Heart right ventricle (tissue), 16 donors: ENCODE measurements at regions of chr3 and their contacts with region 1.

Region 1: DNA sequence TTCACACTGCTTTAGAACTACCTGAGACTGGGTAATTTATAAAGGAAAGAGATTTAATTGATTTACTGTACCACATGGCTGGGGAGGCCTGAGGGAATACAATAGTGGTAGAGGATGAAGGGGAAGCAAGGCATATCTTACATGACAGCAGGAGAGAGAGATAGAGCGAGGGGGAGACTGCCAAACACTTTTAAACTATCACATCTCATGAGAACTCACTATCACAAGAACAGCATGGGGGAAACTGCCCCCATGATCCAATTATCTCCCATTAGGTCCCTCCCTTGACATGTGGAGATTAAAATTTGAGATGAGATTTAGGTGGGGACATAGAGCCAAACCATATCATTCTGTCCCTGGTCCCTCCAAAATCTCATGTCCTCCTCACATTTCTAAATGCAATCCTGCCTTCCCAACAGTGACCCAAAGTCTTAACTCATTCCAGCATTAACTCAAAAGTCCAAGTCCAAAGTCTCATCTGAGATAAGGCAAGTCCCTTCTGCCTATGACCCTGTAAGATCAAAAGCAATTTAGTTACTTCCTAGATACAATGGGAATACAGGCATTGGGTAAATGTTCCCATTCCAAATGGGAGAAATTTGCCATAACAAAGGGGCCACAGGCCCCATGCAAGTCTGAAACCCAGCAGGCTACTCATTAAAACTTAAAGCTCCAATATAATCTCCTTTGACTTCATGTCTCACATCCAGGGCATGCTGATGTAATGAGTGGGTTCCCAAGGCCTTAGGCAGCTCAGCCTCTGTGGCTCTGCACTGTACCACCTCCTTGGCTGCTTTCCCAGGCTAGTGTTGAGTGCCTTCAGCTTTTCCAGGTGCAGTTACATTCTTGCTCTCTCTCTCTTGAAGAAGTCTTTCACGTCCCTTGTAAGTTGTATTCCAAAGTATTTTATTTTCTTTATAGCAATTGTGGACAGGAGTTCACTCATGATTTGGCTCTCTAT is 481.7 kb upstream of the TGFBR2 start:
- DNase-seq: peak in 1 of 2 donors; percentile 51
- ATAC-seq: peak in 5 of 8 donors; percentile 67 to 79 (median 78)
- H3K4me3 ChIP-seq: no peak overlapping the region
- H3K27ac ChIP-seq: no peak overlapping the region
- H3K4me1 ChIP-seq: peaks cover 0 to 10% (median 0%) of the 10 kb centered on the region in 9 donors
- H3K27me3 ChIP-seq: no peaks in the 10 kb centered on the region
- CTCF ChIP-seq: no peak

Region 2: DNA sequence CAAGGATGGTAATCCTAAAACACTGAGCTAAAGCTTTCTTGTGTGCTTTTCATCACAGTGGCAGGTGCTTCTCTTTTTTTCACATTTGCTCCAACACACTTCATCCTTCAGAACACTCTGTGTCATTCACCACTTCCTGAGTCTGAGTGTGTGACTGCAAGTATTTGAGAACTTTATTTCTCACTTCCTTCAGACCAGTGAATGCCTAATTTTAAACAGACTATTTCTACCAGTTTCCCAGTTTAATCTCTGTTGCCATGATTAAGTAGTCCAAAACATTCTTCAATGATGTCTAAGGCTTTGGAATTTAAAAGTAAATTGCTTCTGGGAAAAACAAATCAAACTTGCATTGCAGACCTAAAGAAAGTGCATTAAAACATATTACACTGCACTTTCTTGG is 302.6 kb before region 1 on chr3:
- intact Hi-C with region 1: no loop called
- DNase-seq: no peak
- ATAC-seq: no peak
- H3K4me3 ChIP-seq: no peak overlapping the region
- H3K27ac ChIP-seq: no peak overlapping the region
- H3K4me1 ChIP-seq: no peaks in the 10 kb centered on the region
- H3K27me3 ChIP-seq: no peaks in the 10 kb centered on the region
- CTCF ChIP-seq: no peak

Region 3: GRCh38 chr3:30193625-30194044 is 68.9 kb after region 1 on chr3:
- intact Hi-C with region 1: loop called in 3 of 10 experiments (anchors 5 kb)
- DNase-seq: no peak
- ATAC-seq: no peak
- H3K4me3 ChIP-seq: no peak overlapping the region
- H3K27ac ChIP-seq: no peak overlapping the region
- H3K4me1 ChIP-seq: peaks cover 2 to 38% (median 21%) of the 10 kb centered on the region in 9 donors
- H3K27me3 ChIP-seq: no peaks in the 10 kb centered on the region
- CTCF ChIP-seq: no peak

Region 4: DNA sequence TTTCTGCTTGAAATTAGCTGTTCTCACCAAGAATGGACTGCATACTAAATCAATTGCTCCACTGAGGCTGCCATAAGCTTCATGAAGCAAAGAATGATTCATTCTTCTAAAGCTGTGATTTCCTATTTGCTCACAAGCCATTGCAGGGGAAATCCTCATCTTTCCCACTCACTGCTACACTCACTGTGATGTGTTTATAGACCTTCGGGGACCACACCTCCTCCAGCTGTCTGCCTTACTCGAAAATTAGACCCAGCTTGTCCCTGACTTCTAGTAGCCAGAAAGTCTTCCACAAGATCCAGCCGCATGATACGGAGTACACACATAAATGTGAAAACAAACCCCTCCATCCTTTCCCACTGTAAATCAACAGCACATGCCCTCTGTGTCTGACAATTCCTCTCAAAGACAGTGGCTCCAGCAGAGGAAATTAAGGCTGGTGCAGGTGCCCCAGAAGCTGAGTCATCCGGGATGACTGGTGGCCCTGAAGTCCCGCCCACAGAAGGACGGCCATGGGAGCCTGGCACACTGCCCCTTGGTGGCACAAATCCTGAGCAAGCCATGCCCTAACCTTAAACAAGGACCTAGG is 1580.0 kb after region 1 on chr3:
- intact Hi-C with region 1: no loop called
- DNase-seq: peak in 1 of 2 donors; percentile 22
- ATAC-seq: peak in 2 of 8 donors; percentile 45 to 63
- H3K4me3 ChIP-seq: no peak overlapping the region
- H3K27ac ChIP-seq: no peak overlapping the region
- H3K4me1 ChIP-seq: peaks cover 0 to 13% (median 0%) of the 10 kb centered on the region in 9 donors
- H3K27me3 ChIP-seq: no peaks in the 10 kb centered on the region
- CTCF ChIP-seq: no peak